GM23248 (cell line): ENCODE measurements at regions of chr2 and their contacts with region 1.

Region 1: GRCh38 chr2:147910990-147911473 is 66.2 kb downstream of the ACVR2A start:
- DNase-seq: peak; percentile 76
- H3K4me3 ChIP-seq: no peak overlapping the region
- H3K27ac ChIP-seq: no peak overlapping the region
- H3K4me1 ChIP-seq: peaks cover 15% of the 10 kb centered on the region
- H3K27me3 ChIP-seq: no peaks in the 10 kb centered on the region

Region 2: GRCh38 chr2:146734042-146734820 is 1176.8 kb before region 1 on chr2:
- in situ Hi-C with region 1: loop called (anchors 10 kb)
- DNase-seq: peak; percentile 80
- H3K4me3 ChIP-seq: no peak overlapping the region
- H3K27ac ChIP-seq: no peak overlapping the region
- H3K4me1 ChIP-seq: 0 out of 2 replicates have a peak, but pooled peaks cover 5% of the 10 kb centered on the region
- H3K27me3 ChIP-seq: no peaks in the 10 kb centered on the region

Region 3: GRCh38 chr2:147082850-147083522 is 828.0 kb before region 1 on chr2:
- in situ Hi-C with region 1: loop called (anchors 25 kb)
- DNase-seq: peak; percentile 72
- H3K4me3 ChIP-seq: no peak overlapping the region
- H3K27ac ChIP-seq: no peak overlapping the region
- H3K4me1 ChIP-seq: peaks cover 25% of the 10 kb centered on the region
- H3K27me3 ChIP-seq: no peaks in the 10 kb centered on the region